PC-3 (cell line): ENCODE measurements at regions of chr3 and their contacts with region 1.

Region 1: GRCh38 chr3:39000008-39000450 is 51.7 kb downstream of the SCN11A start:
- DNase-seq: peak; percentile 90
- ATAC-seq: peak; percentile 88
- H3K4me3 ChIP-seq: no peak overlapping the region
- H3K27ac ChIP-seq: no peak overlapping the region
- H3K4me1 ChIP-seq: no peaks in the 10 kb centered on the region; the same call in 1 of the 2 replicates
- H3K27me3 ChIP-seq: peaks cover 16% of the 10 kb centered on the region
- CTCF ChIP-seq: peak; percentile 99

Region 2: GRCh38 chr3:38521391-38521987 is 478.5 kb before region 1 on chr3:
- CTCF ChIA-PET with region 1: interaction called, 6 read pairs
- POLR2A ChIA-PET with region 1: no interaction called
- intact Hi-C with region 1: loop called (anchors 1 kb)
- DNase-seq: peak; percentile 84
- ATAC-seq: peak; percentile 38
- H3K4me3 ChIP-seq: no peak overlapping the region
- H3K27ac ChIP-seq: no peak overlapping the region
- H3K4me1 ChIP-seq: peaks cover 8% of the 10 kb centered on the region
- H3K27me3 ChIP-seq: no peaks in the 10 kb centered on the region
- CTCF ChIP-seq: peak; percentile 97

Region 3: GRCh38 chr3:38651154-38651789 is 348.8 kb before region 1 on chr3:
- CTCF ChIA-PET with region 1: no interaction called
- POLR2A ChIA-PET with region 1: no interaction called
- intact Hi-C with region 1: loop called (anchors 5 kb)
- DNase-seq: peak; percentile 70
- ATAC-seq: peak; percentile 50
- H3K4me3 ChIP-seq: no peak overlapping the region
- H3K27ac ChIP-seq: no peak overlapping the region
- H3K4me1 ChIP-seq: peaks cover 3% of the 10 kb centered on the region; the same call in 1 of the 2 replicates
- H3K27me3 ChIP-seq: peaks cover 42% of the 10 kb centered on the region; the same call in 1 of the 2 replicates
- CTCF ChIP-seq: peak; percentile 89

Region 4: GRCh38 chr3:38738630-38739395 is 261.2 kb before region 1 on chr3:
- CTCF ChIA-PET with region 1: no interaction called
- POLR2A ChIA-PET with region 1: no interaction called
- intact Hi-C with region 1: loop called (anchors 1 kb)
- DNase-seq: peak; percentile 71
- ATAC-seq: peak; percentile 49
- H3K4me3 ChIP-seq: no peak overlapping the region
- H3K27ac ChIP-seq: no peak overlapping the region
- H3K4me1 ChIP-seq: no peaks in the 10 kb centered on the region
- H3K27me3 ChIP-seq: peaks cover 59% of the 10 kb centered on the region
- CTCF ChIP-seq: peak; percentile 83

Region 5: DNA sequence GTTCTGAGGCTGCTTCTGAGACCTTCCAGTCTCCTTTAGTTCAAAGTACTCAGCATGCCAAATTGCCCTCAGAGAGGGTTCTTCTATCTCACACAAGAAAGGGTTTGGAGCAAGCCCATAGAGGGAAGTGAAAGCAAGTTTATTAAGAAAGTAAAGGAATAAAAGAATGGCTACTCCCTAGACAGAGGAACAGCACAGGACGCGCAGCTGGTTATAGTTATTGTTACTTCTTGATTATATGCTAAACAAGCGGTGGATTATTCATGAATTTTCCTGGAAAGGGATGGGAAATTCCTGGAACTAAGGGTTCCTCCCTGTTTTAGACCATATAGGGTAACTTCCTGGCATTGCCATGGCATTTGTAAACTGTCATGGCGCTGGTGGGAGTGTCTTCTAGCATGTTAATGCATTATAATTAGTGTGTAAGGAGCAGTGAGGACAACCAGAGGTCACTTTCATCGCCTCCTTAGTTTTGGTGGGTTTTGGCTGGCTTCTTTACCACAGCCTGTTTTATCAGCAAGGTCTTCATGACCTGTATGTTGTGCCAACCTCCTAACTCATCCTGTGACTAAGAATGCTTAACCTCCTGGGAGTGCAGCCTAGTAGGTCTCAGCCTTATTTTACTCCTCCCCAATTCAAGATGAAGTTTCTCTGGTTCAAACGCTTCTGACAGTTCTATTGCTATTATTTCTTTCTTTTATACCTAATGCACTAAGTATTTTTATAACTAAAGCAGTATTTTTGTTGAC is 25.4 kb after region 1 on chr3:
- CTCF ChIA-PET with region 1: no interaction called
- POLR2A ChIA-PET with region 1: no interaction called
- intact Hi-C with region 1: loop called (anchors 2 kb)
- DNase-seq: peak; percentile 13
- ATAC-seq: no peak
- H3K4me3 ChIP-seq: no peak overlapping the region
- H3K27ac ChIP-seq: no peak overlapping the region
- H3K4me1 ChIP-seq: no peaks in the 10 kb centered on the region
- H3K27me3 ChIP-seq: peaks cover 46% of the 10 kb centered on the region
- CTCF ChIP-seq: no peak